Activated T-helper 1 cell treated with anti-CD3 and anti-CD28 coated beads, Interleukin-12 subunit alpha, Interleukin-12 subunit beta, Interleukin-2, Interleukin-4 antibody, amounts not matched to agents 30 ng/mL and 10 ng/mL and 1 ng/mL, durations not matched to agents 14 hours and 24 hours and 36 hours (primary cell): ENCODE measurements at regions of chr12 and their contacts with region 1.

Region 1: DNA sequence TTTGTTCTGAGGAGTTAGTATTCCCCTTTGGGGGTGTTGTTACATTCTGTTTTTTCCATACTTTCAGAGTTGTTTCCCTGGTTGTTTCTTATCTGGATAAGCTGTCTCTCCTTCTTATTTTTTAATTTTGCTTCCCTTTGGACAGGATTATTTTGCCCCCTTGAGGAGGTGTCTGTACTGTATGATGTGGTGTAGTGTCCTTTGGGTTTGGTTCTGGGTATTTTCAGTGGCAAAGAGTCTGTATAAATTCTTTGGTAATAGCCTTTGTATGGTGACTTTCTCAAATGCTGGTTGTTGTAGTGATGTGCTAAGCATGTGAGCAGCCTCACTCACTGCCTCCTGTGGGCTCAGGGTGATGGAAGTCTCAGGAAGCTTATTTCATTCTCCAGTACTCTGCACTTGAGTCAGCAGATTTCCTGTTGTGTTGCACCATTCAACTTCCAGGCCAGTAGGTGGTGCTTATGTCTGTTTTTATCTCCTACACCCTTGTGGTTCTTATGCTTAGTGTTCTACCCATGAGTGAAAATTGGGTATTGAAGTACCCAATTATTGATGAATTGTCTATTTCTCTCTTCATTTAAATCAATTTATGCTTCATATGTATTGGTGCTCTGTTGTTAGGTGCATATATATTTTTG is 103.3 kb upstream of the PMCH start:
- DNase-seq: peak; percentile 28
- H3K4me3 Mint-ChIP-seq: no peak overlapping the region
- H3K27ac Mint-ChIP-seq: no peak overlapping the region
- H3K4me1 Mint-ChIP-seq: peaks cover 21% of the 10 kb centered on the region
- H3K27me3 Mint-ChIP-seq: peaks cover 9% of the 10 kb centered on the region

Region 2: GRCh38 chr12:102169922-102170621 is 130.9 kb before region 1 on chr12:
- intact Hi-C with region 1: loop called (anchors 1 kb)
- DNase-seq: no peak
- H3K4me3 Mint-ChIP-seq: no peak overlapping the region
- H3K27ac Mint-ChIP-seq: no peak overlapping the region
- H3K4me1 Mint-ChIP-seq: peaks cover 29% of the 10 kb centered on the region
- H3K27me3 Mint-ChIP-seq: no peaks in the 10 kb centered on the region

Region 3: GRCh38 chr12:102543494-102544485 is 242.8 kb after region 1 on chr12:
- intact Hi-C with region 1: loop called (anchors 5 kb)
- DNase-seq: no peak
- H3K4me3 Mint-ChIP-seq: no peak overlapping the region
- H3K27ac Mint-ChIP-seq: no peak overlapping the region
- H3K4me1 Mint-ChIP-seq: peaks cover 4% of the 10 kb centered on the region
- H3K27me3 Mint-ChIP-seq: peaks cover 8% of the 10 kb centered on the region

Region 4: GRCh38 chr12:102769319-102769916 is 468.5 kb after region 1 on chr12:
- intact Hi-C with region 1: loop called (anchors 2 kb)
- DNase-seq: peak; percentile 11
- H3K4me3 Mint-ChIP-seq: no peak overlapping the region
- H3K27ac Mint-ChIP-seq: no peak overlapping the region
- H3K4me1 Mint-ChIP-seq: no peaks in the 10 kb centered on the region
- H3K27me3 Mint-ChIP-seq: peaks cover 12% of the 10 kb centered on the region